Calu3 (cell line): ENCODE measurements at regions of chr4 and their contacts with region 1.

Region 1: GRCh38 chr4:110510955-110511544 is 35.1 kb downstream of the ENPEP start:
- DNase-seq: no peak
- H3K4me3 Mint-ChIP-seq: no peak overlapping the region
- H3K27ac Mint-ChIP-seq: no peak overlapping the region
- H3K4me1 Mint-ChIP-seq: no peaks in the 10 kb centered on the region
- H3K27me3 Mint-ChIP-seq: no peaks in the 10 kb centered on the region
- CTCF ChIP-seq: no peak

Region 2: GRCh38 chr4:110049951-110050925 is 460.8 kb before region 1 on chr4:
- CTCF ChIA-PET with region 1: no interaction called
- intact Hi-C with region 1: loop called (anchors 2 kb)
- DNase-seq: peak; percentile 18
- H3K4me3 Mint-ChIP-seq: no peak overlapping the region
- H3K27ac Mint-ChIP-seq: no peak overlapping the region
- H3K4me1 Mint-ChIP-seq: no peaks in the 10 kb centered on the region
- H3K27me3 Mint-ChIP-seq: no peaks in the 10 kb centered on the region
- CTCF ChIP-seq: peak; percentile 60

Region 3: DNA sequence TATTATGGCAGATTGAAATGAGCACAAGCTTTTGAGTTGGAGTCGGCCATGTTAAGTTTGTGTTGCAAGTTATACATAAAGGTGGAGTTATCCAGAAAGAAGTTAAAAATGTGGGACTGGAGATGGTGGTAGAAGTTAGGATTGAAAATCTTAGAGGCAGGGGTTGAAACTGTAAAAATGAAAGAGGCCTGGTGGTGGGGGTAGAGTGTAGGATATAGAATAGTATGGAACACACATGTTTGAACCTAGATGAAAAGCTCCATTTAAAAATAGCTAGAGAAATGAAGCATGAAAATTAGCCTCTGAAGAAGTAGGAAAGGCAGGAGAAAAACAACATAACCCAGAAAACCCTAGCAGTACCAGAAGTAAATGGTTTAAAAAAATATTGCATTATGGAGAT is 166.9 kb before region 1 on chr4:
- CTCF ChIA-PET with region 1: interaction called, 12 read pairs
- intact Hi-C with region 1: loop called (anchors 2 kb)
- DNase-seq: peak; percentile 14
- H3K4me3 Mint-ChIP-seq: no peak overlapping the region
- H3K27ac Mint-ChIP-seq: no peak overlapping the region
- H3K4me1 Mint-ChIP-seq: no peaks in the 10 kb centered on the region
- H3K27me3 Mint-ChIP-seq: no peaks in the 10 kb centered on the region
- CTCF ChIP-seq: no peak

Region 4: DNA sequence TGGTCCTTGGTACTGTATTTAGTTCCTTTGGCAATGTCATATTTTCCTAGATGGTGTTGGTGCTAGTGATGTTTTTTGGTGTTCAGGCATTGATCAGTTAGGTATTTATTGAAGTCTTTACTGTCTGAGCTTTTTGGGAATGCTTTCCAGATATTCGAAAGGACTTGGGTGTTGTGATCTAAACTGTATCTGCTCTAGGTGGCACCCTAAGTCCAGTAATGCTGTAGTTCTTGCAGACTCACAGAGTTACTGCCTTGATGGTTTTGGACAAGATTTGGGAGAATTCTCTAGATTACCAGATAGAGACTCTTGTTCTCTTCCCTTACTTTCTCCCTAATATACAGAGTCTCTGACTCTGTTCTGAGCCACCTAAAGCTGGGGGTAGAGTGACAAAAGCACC is 625.4 kb after region 1 on chr4:
- CTCF ChIA-PET with region 1: no interaction called
- intact Hi-C with region 1: no loop called
- DNase-seq: peak; percentile 10
- H3K4me3 Mint-ChIP-seq: no peak overlapping the region
- H3K27ac Mint-ChIP-seq: no peak overlapping the region
- H3K4me1 Mint-ChIP-seq: no peaks in the 10 kb centered on the region
- H3K27me3 Mint-ChIP-seq: no peaks in the 10 kb centered on the region
- CTCF ChIP-seq: no peak